ENCODE measurements at regions of chr16 and their contacts with region 1.

Region 1: DNA sequence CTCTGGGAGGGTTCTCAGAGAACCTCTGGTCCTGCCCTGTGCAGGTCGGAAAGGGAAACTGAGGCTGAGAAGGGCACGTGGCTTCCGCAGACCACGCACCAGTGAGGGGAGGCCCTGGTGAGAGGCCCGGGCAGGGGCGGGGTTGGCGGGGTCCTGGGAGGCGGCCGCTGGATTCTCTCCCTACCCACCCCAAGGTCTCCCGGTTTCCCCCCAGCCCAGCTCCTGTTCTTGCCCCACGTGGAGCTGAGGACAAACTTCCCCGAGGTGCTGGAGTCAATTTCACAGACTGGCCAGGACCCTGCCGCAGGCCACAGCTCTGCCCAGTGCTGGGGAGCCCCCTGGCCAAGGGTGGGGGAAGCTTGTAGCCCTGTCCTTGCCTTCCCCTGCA is 11.5 kb downstream of the CCL17 start:
- DNase-seq: no peak
- ATAC-seq: no peak

Region 2: GRCh38 chr16:57300387-57301125 is 115.6 kb before region 1 on chr16:
- intact Hi-C with region 1: loop called (anchors 2 to 5 kb)
- DNase-seq: peak; percentile 98 to 99
- ATAC-seq: peak; percentile 88

Region 3: DNA sequence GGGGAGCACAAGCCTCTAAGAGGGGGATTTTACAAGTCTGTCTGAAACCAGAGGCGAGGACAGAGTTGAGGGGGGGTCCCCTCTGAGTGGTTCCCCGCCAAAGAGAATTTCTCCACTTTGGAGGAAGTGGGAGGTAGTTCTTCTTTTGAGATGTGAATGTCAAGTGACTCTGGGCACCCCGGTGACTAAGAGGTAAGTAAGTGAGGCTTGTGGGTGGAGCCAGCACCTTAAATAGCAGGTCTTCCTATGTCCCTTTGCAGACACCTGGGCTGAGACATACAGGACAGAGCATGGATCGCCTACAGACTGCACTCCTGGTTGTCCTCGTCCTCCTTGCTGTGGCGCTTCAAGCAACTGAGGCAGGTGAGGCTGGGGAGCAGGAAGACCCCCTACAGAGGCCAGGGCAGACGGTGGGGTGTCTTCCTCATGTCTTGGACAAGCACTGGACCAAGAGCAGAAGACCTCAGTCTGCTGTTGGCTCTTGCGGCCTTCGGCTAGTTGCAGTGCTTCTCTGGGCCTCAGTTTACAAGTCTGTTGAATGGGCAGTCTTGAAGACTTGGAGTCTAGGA is 57.5 kb before region 1 on chr16 and contains the start of gene CCL22:
- intact Hi-C with region 1: no loop called
- DNase-seq: no peak
- ATAC-seq: no peak
- total RNA-seq, gene CCL22: 0.45 TPM in 1 of 2 donors, not detected in the other

Region 4: DNA sequence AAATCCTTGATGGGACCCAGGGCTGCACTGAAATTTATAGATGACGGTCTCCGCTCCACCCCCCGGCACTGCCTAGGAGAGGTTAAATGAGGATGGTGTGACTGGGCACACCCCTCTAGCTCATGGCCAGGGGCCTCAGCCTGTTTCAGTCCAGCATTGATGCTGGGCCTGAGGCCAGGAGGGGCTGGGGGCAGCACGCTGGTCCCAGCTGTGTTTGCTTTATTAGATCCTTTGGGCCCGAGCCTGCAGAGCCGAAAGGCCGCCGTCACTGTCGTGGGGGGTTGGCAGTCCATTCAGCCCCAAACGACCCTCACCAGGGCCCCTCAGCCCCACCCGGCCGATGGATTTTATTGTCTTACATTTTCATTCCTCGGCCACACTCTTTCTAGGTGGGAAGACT is 81.0 kb after region 1 on chr16:
- intact Hi-C with region 1: no loop called
- DNase-seq: no peak
- ATAC-seq: no peak